Endothelial cell of umbilical vein (primary cell): ENCODE measurements at regions of chr7 and their contacts with region 1.

Region 1: DNA sequence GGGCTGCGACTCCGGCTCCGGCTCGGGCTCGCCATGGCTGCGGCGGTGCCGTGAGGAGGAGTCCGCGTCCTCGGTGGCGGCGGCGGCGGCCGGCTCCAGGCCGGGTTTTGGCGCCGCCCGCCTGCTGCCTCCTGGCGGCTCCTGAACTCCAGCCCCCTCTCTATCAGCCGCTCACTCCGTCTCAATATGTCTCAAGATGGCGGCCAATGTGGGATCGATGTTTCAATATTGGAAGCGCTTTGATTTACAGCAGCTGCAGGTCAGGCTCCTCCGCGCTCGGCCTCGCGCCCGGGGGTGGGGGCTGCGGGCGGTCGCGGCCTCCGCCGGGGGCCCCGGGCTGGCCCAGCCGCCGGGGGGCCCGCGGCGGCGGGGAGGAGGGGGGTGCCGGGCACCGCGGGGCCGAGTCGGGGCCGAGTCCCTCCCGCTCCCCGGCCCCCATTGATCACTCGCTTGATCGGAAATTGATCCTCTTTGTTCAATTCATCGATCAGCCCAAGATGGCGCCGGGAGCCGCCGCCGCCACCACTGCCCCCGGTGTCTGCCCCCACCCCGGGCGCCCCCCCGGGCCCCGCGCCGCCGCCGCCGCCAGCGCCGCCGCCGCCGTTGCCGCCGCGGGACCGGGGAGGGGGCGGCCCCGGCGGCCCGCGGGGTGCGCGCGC is 1.5 kb upstream of the CUX1 start:
- DNase-seq: peak; percentile 67
- H3K4me3 ChIP-seq: peak overlapping the region; percentile 47 to 67 (median 48)
- H3K27ac ChIP-seq: peak overlapping the region; percentile 38
- H3K4me1 ChIP-seq: peaks cover 14% of the 10 kb centered on the region
- H3K27me3 ChIP-seq: no peaks in the 10 kb centered on the region
- CTCF ChIP-seq: peak; percentile 2 to 19
- POLR2A ChIP-seq: peak; percentile 59

Region 2: GRCh38 chr7:101542527-101543241 is 273.3 kb before region 1 on chr7:
- CTCF ChIA-PET with region 1: interaction called, 17 read pairs
- POLR2A ChIA-PET with region 1: no interaction called
- dilution Hi-C with region 1: no loop called
- intact Hi-C with region 1: loop called (anchors 10 kb)
- DNase-seq: peak; percentile 48
- H3K4me3 ChIP-seq: no peak overlapping the region
- H3K27ac ChIP-seq: no peak overlapping the region
- H3K4me1 ChIP-seq: no peaks in the 10 kb centered on the region
- H3K27me3 ChIP-seq: no peaks in the 10 kb centered on the region
- CTCF ChIP-seq: peak; percentile 58 to 84
- POLR2A ChIP-seq: no peak

Region 3: GRCh38 chr7:101688183-101688831 is 127.7 kb before region 1 on chr7:
- CTCF ChIA-PET with region 1: interaction called, 12 read pairs
- POLR2A ChIA-PET with region 1: no interaction called
- dilution Hi-C with region 1: no loop called
- intact Hi-C with region 1: loop called (anchors 1 kb)
- DNase-seq: peak; percentile 58
- H3K4me3 ChIP-seq: peak overlapping the region in 2 of 3 experiments; percentile 8 to 17
- H3K27ac ChIP-seq: no peak overlapping the region
- H3K4me1 ChIP-seq: peaks cover 6% of the 10 kb centered on the region
- H3K27me3 ChIP-seq: no peaks in the 10 kb centered on the region
- CTCF ChIP-seq: peak; percentile 90 to 97
- POLR2A ChIP-seq: no peak

Region 4: GRCh38 chr7:101751670-101752069 is 64.3 kb before region 1 on chr7:
- CTCF ChIA-PET with region 1: no interaction called
- POLR2A ChIA-PET with region 1: no interaction called
- dilution Hi-C with region 1: no loop called
- intact Hi-C with region 1: no loop called
- DNase-seq: no peak
- H3K4me3 ChIP-seq: no peak overlapping the region
- H3K27ac ChIP-seq: no peak overlapping the region
- H3K4me1 ChIP-seq: peaks cover 7% of the 10 kb centered on the region
- H3K27me3 ChIP-seq: peaks cover 3 to 5% of the 10 kb centered on the region in 2 experiments
- CTCF ChIP-seq: no peak
- POLR2A ChIP-seq: no peak

Region 5: DNA sequence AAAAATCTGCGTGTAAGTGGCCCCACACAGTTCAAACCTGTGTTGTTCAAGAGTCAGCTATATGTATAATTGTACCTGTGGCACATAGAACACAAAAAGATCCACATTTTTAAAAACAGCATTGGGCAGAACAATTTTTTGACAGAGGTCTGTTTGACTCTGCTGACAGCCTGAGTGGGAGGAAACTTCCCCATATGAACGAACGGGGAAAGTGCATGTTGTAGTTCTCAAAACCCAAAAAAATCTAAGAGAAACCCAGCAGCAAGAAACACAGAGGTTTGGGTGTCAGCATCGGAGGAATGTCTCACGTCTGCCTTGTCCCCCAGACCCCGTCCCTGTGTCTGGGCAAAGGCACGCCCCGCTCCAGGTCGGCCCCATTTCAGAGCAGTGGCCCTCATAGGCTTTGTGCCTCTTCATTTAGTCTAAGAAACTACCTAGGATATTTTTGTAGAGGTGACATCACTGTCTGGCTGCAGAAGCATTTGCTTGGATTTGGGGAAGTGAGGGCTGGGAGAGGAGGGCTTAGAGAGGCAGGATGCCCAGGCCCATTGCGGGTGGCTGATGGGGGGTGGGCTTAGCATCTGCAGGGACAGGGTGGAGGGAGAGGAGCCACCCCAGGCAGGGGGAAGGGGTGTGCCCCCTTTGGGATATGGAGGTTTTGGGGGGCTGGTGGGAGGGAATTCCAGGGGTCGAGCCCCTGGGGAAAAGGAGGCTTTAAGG is 12.5 kb after region 1 on chr7:
- CTCF ChIA-PET with region 1: no interaction called
- POLR2A ChIA-PET with region 1: no interaction called
- dilution Hi-C with region 1: no loop called
- intact Hi-C with region 1: no loop called
- DNase-seq: no peak
- H3K4me3 ChIP-seq: no peak overlapping the region
- H3K27ac ChIP-seq: no peak overlapping the region
- H3K4me1 ChIP-seq: no peaks in the 10 kb centered on the region
- H3K27me3 ChIP-seq: no peaks in the 10 kb centered on the region
- CTCF ChIP-seq: no peak
- POLR2A ChIP-seq: no peak

Region 6: GRCh38 chr7:101856473-101857357 is 40.8 kb after region 1 on chr7:
- CTCF ChIA-PET with region 1: interaction called, 5 read pairs
- POLR2A ChIA-PET with region 1: interaction called, 7 read pairs
- dilution Hi-C with region 1: no loop called
- intact Hi-C with region 1: loop called (anchors 2 kb)
- DNase-seq: peak; percentile 86
- H3K4me3 ChIP-seq: peak overlapping the region; percentile 1 to 23 (median 20)
- H3K27ac ChIP-seq: peak overlapping the region; percentile 62
- H3K4me1 ChIP-seq: peaks cover 23% of the 10 kb centered on the region
- H3K27me3 ChIP-seq: no peaks in the 10 kb centered on the region
- CTCF ChIP-seq: peak; percentile 33 to 35
- POLR2A ChIP-seq: peak; percentile 40

Region 7: DNA sequence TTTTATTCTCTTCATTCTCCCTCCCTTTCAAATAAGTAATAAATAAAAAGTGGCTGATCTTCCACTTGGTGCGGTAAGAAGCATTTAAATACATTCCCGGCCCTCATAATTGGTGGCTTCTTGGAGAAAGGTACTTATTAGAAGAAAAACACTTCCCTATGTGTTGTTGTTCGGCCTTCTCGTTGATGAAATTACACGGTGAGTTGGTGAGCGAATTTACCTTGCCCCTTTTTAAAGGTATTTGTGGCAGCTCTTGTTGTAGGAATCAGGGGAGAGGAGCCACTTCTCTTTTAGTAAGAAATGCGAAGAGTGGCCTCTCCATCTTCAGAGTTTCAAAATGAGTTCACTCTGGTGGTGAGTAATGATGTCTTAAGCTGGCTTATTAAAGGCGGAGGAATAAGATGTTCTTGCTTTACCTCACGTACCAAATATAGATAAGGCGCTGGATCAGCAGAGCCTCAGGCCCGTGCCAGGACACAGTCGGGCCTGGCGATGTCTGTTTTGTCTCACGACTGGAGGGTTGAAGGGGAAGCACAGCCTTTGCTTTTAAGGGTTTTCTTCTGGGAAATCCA is 137.4 kb after region 1 on chr7:
- CTCF ChIA-PET with region 1: no interaction called
- POLR2A ChIA-PET with region 1: no interaction called
- dilution Hi-C with region 1: no loop called
- intact Hi-C with region 1: loop called (anchors 1 kb)
- DNase-seq: no peak
- H3K4me3 ChIP-seq: peak overlapping the region in 1 of 3 experiments; percentile 43
- H3K27ac ChIP-seq: peak overlapping the region; percentile 88
- H3K4me1 ChIP-seq: peaks cover 28% of the 10 kb centered on the region
- H3K27me3 ChIP-seq: no peaks in the 10 kb centered on the region
- CTCF ChIP-seq: no peak
- POLR2A ChIP-seq: no peak

Region 8: DNA sequence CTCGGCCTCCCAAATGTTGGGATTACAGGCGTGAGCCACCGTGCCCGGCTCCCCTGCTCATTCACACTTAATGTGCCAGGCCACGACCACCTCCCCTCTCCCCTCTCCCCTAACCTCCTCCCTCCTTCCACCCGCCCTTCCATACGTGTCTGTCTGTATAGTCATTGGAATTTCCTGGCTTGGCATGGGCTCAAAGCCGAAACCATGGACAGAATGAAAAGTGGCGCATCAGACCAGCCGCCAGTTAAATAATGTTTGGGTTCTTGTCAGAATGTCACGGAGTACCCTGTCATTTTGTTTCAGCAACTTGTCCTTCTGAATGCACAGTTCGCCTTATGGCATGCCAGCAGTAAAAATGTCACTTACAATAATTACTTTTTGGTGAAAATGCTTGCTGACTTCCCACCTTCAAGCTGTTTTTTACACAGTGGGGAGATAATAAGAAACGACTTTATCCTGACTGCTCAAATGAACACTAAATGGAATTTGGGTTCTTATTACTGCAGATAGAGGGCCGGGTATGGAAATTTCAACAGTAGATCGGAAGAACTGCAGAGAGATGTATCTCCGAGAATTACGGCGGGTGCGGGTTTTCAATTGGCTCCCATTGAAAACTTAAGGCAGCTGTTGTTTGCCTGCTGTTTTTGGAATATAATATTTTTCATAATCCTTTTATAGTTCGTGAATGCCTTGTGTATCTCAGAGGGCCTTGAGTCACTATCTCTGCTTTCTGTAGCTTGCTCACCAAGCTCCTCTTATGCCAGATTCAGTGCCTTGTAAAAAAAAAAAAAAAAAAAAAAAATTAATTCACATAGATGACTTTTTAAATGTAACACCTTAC is 405.2 kb after region 1 on chr7:
- CTCF ChIA-PET with region 1: no interaction called
- POLR2A ChIA-PET with region 1: no interaction called
- dilution Hi-C with region 1: no loop called
- intact Hi-C with region 1: loop called (anchors 5 kb)
- DNase-seq: peak; percentile 69
- H3K4me3 ChIP-seq: peak overlapping the region in 1 of 3 experiments; percentile 29
- H3K27ac ChIP-seq: peak overlapping the region; percentile 28
- H3K4me1 ChIP-seq: peaks cover 9% of the 10 kb centered on the region
- H3K27me3 ChIP-seq: no peaks in the 10 kb centered on the region
- CTCF ChIP-seq: no peak
- POLR2A ChIP-seq: no peak